Right cardiac atrium (tissue), 5 donors: ENCODE measurements at regions of chr9 and their contacts with region 1.

Region 1: GRCh38 chr9:32413424-32413823 is 29.0 kb downstream of the ACO1 start:
- DNase-seq: no peak
- ATAC-seq: no peak
- H3K4me3 ChIP-seq: no peak overlapping the region
- H3K27ac ChIP-seq: no peak overlapping the region
- H3K4me1 ChIP-seq: no peaks in the 10 kb centered on the region
- H3K27me3 ChIP-seq: no peaks in the 10 kb centered on the region

Region 2: DNA sequence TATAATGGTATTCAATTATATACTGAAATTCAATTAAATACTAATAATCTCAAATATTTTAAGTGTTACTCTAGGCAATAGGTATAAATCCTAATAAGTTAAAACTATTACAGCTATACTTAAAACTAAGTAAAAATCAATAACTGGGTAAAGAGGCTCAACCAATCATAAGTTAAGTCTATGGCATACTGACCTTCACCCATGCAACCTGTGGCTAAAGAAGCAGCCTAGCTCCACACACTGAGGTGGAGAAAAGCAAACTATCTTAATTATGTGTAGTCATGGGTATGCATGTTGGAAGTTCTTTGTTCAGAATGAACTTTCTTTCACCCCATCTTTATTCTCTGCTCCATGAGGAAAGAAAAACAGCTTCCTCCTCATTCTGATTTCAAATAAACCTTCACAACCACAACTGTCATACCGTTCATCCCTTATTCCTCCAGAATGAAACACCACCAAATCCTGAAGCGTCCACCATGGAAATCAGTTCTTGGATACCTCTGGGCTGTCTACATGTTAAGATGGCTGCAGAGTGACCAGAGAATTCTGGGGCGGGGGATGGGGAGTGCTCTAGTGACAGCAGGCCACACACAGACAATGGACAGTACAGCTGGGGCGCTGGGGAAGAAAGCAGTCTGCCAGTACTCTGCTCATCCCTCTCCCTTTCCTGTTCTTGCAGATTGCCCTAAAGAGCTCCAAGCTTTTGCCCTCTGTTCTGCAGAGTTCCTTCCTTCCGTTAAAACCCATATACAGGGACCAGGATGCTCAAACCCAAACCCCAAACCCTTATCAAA is 50.3 kb after region 1 on chr9:
- intact Hi-C with region 1: loop called in 1 of 4 experiments (anchors 5 kb)
- DNase-seq: no peak
- ATAC-seq: no peak
- H3K4me3 ChIP-seq: no peak overlapping the region
- H3K27ac ChIP-seq: no peak overlapping the region
- H3K4me1 ChIP-seq: no peaks in the 10 kb centered on the region
- H3K27me3 ChIP-seq: no peaks in the 10 kb centered on the region